Ovary (tissue), 10 donors: ENCODE measurements at regions of chr16 and their contacts with region 1.

Region 1: DNA sequence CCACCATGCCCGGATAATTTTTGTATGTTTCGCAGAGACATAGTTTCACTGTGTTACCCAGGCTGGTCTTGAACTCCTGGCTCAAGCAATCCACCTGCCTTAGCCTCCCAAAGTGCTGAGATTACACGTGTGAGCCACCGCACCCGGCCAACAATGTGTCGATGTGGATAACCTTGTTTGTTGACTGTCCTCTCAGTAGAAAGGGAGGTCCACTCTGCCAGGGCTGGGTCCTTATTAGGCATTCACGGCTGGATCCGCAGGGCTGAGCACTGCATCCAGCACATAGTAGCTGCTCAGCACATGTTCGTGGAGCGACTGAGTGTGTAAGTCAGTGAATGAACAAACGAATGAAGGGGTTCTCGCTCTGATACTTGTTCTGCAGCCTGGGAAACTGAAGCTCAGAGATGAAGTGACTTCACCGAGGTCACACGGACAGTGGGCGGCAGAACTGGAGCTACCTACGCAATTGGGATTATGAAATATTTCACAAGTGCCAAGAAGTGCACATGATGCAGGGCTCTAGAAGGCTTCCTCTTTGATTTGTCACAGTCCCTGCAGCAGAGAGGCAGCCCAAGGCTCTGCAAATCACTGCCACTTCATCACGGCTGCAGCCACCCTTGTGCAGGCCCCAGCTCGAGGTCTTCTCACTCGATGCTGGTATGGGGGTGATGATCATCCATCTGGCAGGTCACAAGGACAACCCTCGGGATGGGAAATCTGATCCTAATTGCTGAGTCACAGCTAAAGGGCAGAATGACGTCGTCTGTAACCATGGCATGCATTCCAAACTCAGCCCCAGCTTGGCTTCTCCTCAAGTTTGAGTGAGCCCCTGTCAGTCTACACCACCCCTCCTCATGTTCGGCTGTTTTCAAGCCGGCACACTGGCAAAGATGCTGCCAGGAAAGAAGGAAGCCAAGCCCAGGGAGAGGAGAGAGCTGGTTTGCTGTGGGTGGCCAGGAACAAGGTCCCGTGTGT is 28.0 kb upstream of the SNN start:
- DNase-seq: peak; percentile 61 to 87 (median 72)
- H3K4me3 ChIP-seq: no peak overlapping the region
- H3K27ac ChIP-seq: peak overlapping the region; percentile 71 to 79
- H3K4me1 ChIP-seq: peaks cover 9% of the 10 kb centered on the region
- H3K27me3 ChIP-seq: no peaks in the 10 kb centered on the region
- CTCF ChIP-seq: no peak
- EP300 ChIP-seq: peak; percentile 95
- POLR2A ChIP-seq: peak; percentile 63

Region 2: GRCh38 chr16:10964039-10964890 is 675.9 kb before region 1 on chr16:
- intact Hi-C with region 1: loop called in 1 of 4 experiments (anchors 10 kb)
- DNase-seq: peak; percentile 75 to 89 (median 85)
- H3K4me3 ChIP-seq: no peak overlapping the region
- H3K27ac ChIP-seq: no peak overlapping the region
- H3K4me1 ChIP-seq: no peaks in the 10 kb centered on the region
- H3K27me3 ChIP-seq: no peaks in the 10 kb centered on the region
- CTCF ChIP-seq: peak; percentile 81 to 93 (median 85)
- EP300 ChIP-seq: no peak
- POLR2A ChIP-seq: no peak

Region 3: GRCh38 chr16:11396241-11397048 is 243.8 kb before region 1 on chr16:
- intact Hi-C with region 1: loop called in 3 of 4 experiments (anchors 5 kb)
- DNase-seq: peak; percentile 77 to 84 (median 82)
- H3K4me3 ChIP-seq: no peak overlapping the region
- H3K27ac ChIP-seq: no peak overlapping the region
- H3K4me1 ChIP-seq: peaks cover 2% of the 10 kb centered on the region
- H3K27me3 ChIP-seq: no peaks in the 10 kb centered on the region
- CTCF ChIP-seq: peak; percentile 98
- EP300 ChIP-seq: no peak
- POLR2A ChIP-seq: peak; percentile 21

Region 4: DNA sequence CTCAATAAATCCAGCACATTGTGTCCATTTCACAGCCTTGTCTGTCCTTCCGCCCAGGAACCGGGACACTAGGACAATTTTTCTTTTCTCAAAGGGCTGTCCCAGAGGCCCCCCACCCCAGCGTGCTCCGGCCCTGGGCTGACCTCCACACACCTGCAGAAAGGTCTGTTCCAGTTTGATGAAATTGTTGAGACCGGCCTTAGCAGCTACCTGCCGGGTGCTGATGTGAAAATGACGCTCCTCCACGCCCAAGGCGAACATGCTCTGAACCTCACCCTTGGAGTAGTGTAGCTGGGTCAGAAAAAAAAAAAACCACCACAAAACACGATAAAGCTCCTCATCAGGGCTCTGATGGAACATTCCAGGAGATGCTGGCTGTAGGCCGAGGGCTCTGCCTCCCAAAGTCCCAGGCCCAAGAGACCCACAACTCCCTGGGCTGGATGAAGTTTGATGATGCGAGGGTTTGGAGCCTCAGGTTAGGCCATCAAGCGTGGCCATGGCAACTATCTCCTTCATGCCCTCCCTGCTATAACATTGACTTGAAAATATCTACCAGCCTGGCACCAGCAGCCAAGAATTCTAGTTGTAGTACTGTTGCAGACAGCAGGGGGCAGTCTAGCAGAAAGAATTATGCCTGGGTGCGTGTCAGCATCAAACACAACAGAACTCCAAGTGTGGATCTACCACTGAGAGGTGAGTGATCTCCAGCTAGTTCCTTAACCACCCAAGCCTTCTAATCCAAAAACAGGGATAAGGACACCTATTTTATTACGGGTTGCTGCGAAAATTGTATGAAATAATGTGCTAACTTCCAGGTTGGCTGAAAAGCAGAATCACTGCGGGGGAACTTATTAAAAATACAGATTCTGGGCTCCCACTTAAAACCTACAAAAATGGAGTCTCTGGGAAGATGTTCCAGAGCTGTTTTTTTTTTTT is 232.9 kb before region 1 on chr16:
- intact Hi-C with region 1: loop called in 1 of 4 experiments (anchors 5 kb)
- DNase-seq: peak in 3 of 5 donors; percentile 54 to 75 (median 67)
- H3K4me3 ChIP-seq: no peak overlapping the region
- H3K27ac ChIP-seq: no peak overlapping the region
- H3K4me1 ChIP-seq: peaks cover 1% of the 10 kb centered on the region
- H3K27me3 ChIP-seq: no peaks in the 10 kb centered on the region
- CTCF ChIP-seq: peak in 2 of 3 donors; percentile 62 to 83
- EP300 ChIP-seq: no peak
- POLR2A ChIP-seq: no peak

Region 5: DNA sequence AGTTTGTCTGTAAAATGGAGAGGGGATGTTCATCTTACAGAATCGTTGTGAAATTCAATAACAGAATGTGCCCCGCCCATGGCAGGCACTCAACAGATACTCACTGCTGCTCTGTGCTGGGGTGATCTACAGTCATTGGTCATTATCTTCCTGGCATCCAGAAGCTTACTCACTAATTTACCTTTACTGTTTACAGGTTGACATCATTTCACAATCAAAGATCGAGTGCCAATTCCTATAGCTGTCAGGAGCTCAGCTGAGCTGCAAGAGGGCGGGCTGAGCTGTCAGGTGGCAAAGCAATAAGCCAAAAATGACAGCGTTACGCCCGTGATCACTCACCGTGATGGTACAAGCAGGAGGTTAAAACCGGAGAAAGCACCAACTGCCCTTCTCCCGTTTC is 104.7 kb before region 1 on chr16:
- intact Hi-C with region 1: loop called in 3 of 4 experiments (anchors 2 to 10 kb)
- DNase-seq: no peak
- H3K4me3 ChIP-seq: no peak overlapping the region
- H3K27ac ChIP-seq: no peak overlapping the region
- H3K4me1 ChIP-seq: no peaks in the 10 kb centered on the region
- H3K27me3 ChIP-seq: no peaks in the 10 kb centered on the region
- CTCF ChIP-seq: no peak
- EP300 ChIP-seq: no peak
- POLR2A ChIP-seq: no peak

Region 6: DNA sequence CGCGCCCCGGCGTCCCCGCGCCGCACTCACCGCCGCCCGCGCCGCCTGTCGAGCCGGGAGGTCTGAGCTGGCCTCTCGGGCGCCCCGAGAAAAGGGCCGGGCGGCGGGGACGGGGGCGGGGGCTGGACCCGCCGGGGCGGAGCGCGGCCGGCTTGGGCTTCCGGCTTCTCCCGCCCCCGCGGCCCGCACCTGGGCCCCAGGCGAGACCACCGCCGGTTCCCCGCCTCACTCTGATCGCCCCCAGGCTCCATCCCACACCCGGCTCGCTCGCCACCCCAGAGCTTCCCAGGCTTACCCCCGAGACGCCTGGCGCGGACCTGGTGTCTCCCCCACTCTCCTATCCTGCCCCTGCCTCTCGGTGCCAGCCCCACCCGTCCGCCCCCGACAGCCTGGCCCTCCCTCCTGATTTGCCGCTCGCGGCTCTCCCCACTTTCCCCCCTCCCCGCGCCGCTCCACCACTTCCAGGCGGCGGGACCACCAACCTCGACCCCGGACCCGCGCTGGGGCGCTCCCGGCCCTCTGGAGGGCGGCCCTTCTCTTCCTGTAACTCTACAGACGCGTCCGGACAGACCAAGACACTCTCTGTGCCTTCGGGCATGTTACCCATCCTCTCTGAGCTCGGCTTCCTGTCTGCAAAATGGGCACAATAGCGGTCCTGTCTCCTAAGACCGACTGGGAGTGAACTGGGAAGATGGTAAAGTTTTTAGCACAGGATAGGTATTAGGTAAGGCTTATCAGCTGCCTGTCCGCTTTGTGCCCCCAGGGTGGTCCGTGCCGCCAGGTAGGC is 53.2 kb before region 1 on chr16 and contains the start of gene LITAF:
- intact Hi-C with region 1: loop called in 1 of 4 experiments (anchors 5 kb)
- DNase-seq: peak; percentile 72 to 80 (median 74)
- H3K4me3 ChIP-seq: peak within 1 kb of the TSS; percentile 86
- H3K27ac ChIP-seq: peak within 1 kb of the TSS; percentile 88
- H3K4me1 ChIP-seq: peaks cover 3% of the 10 kb centered on the region
- H3K27me3 ChIP-seq: no peaks in the 10 kb centered on the region
- CTCF ChIP-seq: no peak
- EP300 ChIP-seq: no peak
- POLR2A ChIP-seq: peak; percentile 69
- total RNA-seq, gene LITAF: 39.7 to 169 (median 105) TPM

Region 7: GRCh38 chr16:11715246-11715947 is 75.2 kb after region 1 on chr16:
- intact Hi-C with region 1: loop called in 2 of 4 experiments (anchors 10 kb)
- DNase-seq: no peak
- H3K4me3 ChIP-seq: no peak overlapping the region
- H3K27ac ChIP-seq: no peak overlapping the region
- H3K4me1 ChIP-seq: no peaks in the 10 kb centered on the region
- H3K27me3 ChIP-seq: no peaks in the 10 kb centered on the region
- CTCF ChIP-seq: no peak
- EP300 ChIP-seq: no peak
- POLR2A ChIP-seq: no peak